Caco-2 (cell line): ENCODE measurements at regions of chr2 and their contacts with region 1.

Region 1: DNA sequence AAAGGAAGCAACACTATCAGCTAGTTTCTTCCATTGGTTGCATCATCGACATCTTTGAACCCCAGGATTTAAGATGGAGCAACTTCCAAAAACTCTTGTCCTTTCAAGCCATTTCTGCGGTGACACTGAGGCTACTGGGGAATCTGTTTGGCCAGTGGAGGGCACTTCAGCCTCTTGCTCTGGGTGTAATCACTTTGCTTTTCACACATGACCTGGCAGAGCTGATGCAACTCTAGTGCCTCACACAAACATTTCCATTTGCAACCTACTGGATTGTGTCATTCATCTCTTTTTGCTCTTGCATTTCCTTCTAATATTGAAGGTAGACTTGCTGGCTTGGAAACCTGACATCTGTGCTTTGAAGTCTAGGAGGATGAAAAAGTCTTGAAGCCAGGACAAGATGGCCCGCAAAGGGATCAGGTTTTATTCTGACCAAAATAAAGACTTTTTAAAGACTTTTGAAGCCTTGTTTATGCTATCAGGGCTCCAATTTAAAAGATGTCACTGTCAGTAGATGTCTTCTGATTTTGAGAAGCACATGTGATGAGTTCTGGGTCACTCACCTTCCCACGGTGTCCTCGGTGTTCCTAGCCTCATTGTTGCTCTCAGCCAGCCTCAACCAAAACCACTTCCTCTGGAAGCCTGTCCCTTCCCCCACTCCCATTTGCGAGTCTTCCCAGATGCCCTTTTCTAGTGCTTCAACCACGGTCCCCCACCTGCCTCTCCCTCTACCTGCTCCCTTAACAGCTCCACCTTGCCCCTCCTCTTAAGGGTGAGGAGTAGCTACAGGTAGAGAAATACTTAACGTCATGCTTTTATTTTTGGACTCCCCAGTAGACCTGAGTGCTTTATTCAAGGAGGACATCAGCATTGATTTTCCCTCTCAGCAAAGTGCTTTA is 69.7 kb upstream of the KCNE4 start:
- DNase-seq: peak; percentile 62 to 66
- H3K4me3 ChIP-seq: no peak overlapping the region
- H3K4me3 Mint-ChIP-seq: no peak overlapping the region
- H3K27ac Mint-ChIP-seq: peak overlapping the region; percentile 74
- H3K4me1 ChIP-seq: no peaks in the 10 kb centered on the region
- H3K4me1 Mint-ChIP-seq: peaks cover 7% of the 10 kb centered on the region
- H3K27me3 ChIP-seq: no peaks in the 10 kb centered on the region
- H3K27me3 Mint-ChIP-seq: peaks cover 2% of the 10 kb centered on the region
- CTCF ChIP-seq: peak; percentile 45 to 80

Region 2: DNA sequence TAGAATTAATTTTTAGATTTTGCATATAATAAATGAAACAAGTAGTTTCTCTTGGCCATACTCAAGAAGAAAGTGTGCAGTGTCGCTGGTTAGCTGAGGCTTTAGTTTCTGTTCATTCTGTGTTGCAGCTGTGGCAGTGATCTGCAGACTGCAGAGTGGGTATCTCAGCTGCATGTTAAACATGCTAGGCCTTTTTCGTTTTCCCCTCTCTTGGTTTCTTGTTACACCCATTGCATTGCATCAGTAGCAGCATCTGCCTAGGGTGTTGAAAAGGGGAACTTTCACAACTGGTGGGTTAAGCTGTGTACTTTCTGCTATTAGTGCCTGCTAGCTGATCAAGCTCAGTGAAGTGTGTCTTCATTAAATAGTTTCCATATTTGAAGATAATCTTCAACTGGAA is 70.1 kb before region 1 on chr2:
- CTCF ChIA-PET with region 1: no interaction called
- POLR2A ChIA-PET with region 1: no interaction called
- intact Hi-C with region 1: no loop called
- DNase-seq: no peak
- H3K4me3 ChIP-seq: no peak overlapping the region
- H3K4me3 Mint-ChIP-seq: no peak overlapping the region
- H3K27ac Mint-ChIP-seq: no peak overlapping the region
- H3K4me1 ChIP-seq: peaks cover 23% of the 10 kb centered on the region
- H3K4me1 Mint-ChIP-seq: peaks cover 19% of the 10 kb centered on the region
- H3K27me3 ChIP-seq: no peaks in the 10 kb centered on the region
- H3K27me3 Mint-ChIP-seq: no peaks in the 10 kb centered on the region
- CTCF ChIP-seq: no peak

Region 3: DNA sequence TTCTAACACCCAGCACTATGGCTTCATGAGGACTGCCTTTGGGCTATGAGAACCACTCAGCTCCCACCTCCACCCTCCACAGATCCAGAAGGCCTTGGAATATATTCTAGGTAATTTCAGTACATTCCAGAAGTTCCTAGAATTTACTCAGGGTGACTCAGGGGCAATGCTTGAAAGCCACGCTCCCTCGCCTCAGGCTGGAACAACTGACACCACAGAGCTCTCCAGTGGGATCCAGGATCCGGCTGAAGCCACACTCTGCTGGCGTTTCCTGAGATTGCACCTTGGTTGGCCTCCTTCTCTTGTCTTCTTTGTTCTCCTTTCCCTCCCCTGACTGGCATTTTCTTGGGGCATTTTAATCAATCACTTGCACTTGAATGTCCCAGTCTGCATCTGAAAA is 22.9 kb before region 1 on chr2:
- CTCF ChIA-PET with region 1: no interaction called
- POLR2A ChIA-PET with region 1: no interaction called
- intact Hi-C with region 1: no loop called
- DNase-seq: peak; percentile 81 to 90
- H3K4me3 ChIP-seq: no peak overlapping the region
- H3K4me3 Mint-ChIP-seq: no peak overlapping the region
- H3K27ac Mint-ChIP-seq: peak overlapping the region; percentile 49
- H3K4me1 ChIP-seq: peaks cover 25% of the 10 kb centered on the region
- H3K4me1 Mint-ChIP-seq: peaks cover 20% of the 10 kb centered on the region
- H3K27me3 ChIP-seq: no peaks in the 10 kb centered on the region
- H3K27me3 Mint-ChIP-seq: no peaks in the 10 kb centered on the region
- CTCF ChIP-seq: peak; percentile 38 to 44

Region 4: DNA sequence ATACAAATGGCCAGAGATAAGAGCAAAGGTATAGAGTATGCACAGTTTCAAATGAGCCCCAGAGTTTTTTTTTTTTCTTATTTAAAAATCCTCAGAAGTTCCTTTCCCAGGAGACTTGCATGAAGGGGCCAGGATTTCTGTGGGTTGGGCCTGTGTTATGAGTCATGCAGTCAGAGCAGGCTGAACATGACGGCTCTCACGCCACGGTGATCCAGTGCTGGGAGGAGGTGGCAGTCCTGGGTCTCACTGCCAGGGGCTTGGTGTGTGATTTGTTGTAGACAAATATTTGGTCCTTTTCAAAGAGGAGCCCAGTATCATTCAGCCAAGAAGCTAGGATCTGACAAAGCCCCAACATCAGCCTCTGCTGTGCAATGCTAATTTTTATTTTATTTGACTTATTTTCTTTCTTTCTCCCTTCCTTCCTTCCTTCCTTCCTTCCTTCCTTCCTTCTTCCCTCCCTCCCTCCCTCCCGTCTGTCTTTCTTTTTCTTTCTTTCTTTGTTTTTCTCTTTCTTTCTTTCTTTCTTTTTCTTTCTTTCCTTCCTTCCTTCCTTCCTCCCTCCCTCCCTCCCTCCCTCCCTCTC is 59.4 kb after region 1 on chr2:
- CTCF ChIA-PET with region 1: no interaction called
- POLR2A ChIA-PET with region 1: no interaction called
- intact Hi-C with region 1: no loop called
- DNase-seq: peak; percentile 45 to 74
- H3K4me3 ChIP-seq: no peak overlapping the region
- H3K4me3 Mint-ChIP-seq: peak overlapping the region; percentile 19
- H3K27ac Mint-ChIP-seq: peak overlapping the region; percentile 62
- H3K4me1 ChIP-seq: peaks cover 13% of the 10 kb centered on the region; the same call in 1 of the 2 replicates
- H3K4me1 Mint-ChIP-seq: peaks cover 39% of the 10 kb centered on the region
- H3K27me3 ChIP-seq: no peaks in the 10 kb centered on the region
- H3K27me3 Mint-ChIP-seq: no peaks in the 10 kb centered on the region
- CTCF ChIP-seq: no peak

Region 5: GRCh38 chr2:223058952-223059716 is 76.9 kb after region 1 on chr2:
- CTCF ChIA-PET with region 1: no interaction called
- POLR2A ChIA-PET with region 1: no interaction called
- intact Hi-C with region 1: loop called (anchors 2 kb)
- DNase-seq: peak; percentile 57 to 69
- H3K4me3 ChIP-seq: no peak overlapping the region
- H3K4me3 Mint-ChIP-seq: no peak overlapping the region
- H3K27ac Mint-ChIP-seq: no peak overlapping the region
- H3K4me1 ChIP-seq: peaks cover 11% of the 10 kb centered on the region
- H3K4me1 Mint-ChIP-seq: no peaks in the 10 kb centered on the region
- H3K27me3 ChIP-seq: no peaks in the 10 kb centered on the region
- H3K27me3 Mint-ChIP-seq: peaks cover 7% of the 10 kb centered on the region
- CTCF ChIP-seq: no peak